Naive thymus-derived CD4-positive, alpha-beta T cell (primary cell): ENCODE measurements at regions of chr3 and their contacts with region 1.

Region 1: GRCh38 chr3:8987645-8988383 is 24.5 kb upstream of the RAD18 start:
- DNase-seq: peak; percentile 29 to 66 (median 53)
- ATAC-seq: peak; percentile 88
- H3K4me3 ChIP-seq: no peak overlapping the region
- H3K4me3 Mint-ChIP-seq: peak overlapping the region in 9 of 10 donors; percentile 43 to 75 (median 66)
- H3K27ac ChIP-seq: no peak overlapping the region
- H3K27ac Mint-ChIP-seq: peak overlapping the region in 2 of 9 donors; percentile 5 to 84
- H3K4me1 ChIP-seq: no peaks in the 10 kb centered on the region
- H3K4me1 Mint-ChIP-seq: peaks cover 0 to 7% (median 5%) of the 10 kb centered on the region in 7 donors
- H3K27me3 ChIP-seq: no peaks in the 10 kb centered on the region
- H3K27me3 Mint-ChIP-seq: no peaks in the 10 kb centered on the region

Region 2: GRCh38 chr3:7657214-7658112 is 1330.4 kb before region 1 on chr3:
- CTCF ChIA-PET with region 1: no interaction called
- POLR2A ChIA-PET with region 1: no interaction called
- intact Hi-C with region 1: no loop called
- DNase-seq: no peak
- ATAC-seq: no peak
- H3K4me3 ChIP-seq: no peak overlapping the region
- H3K4me3 Mint-ChIP-seq: no peak overlapping the region
- H3K27ac ChIP-seq: no peak overlapping the region
- H3K27ac Mint-ChIP-seq: no peak overlapping the region
- H3K4me1 ChIP-seq: no peaks in the 10 kb centered on the region
- H3K4me1 Mint-ChIP-seq: no peaks in the 10 kb centered on the region
- H3K27me3 ChIP-seq: no peaks in the 10 kb centered on the region
- H3K27me3 Mint-ChIP-seq: peaks cover 0 to 15% (median 4%) of the 10 kb centered on the region in 5 donors

Region 3: GRCh38 chr3:9067352-9067975 is 79.7 kb after region 1 on chr3:
- CTCF ChIA-PET with region 1: no interaction called
- POLR2A ChIA-PET with region 1: no interaction called
- intact Hi-C with region 1: loop called (anchors 1 to 5 kb)
- DNase-seq: peak in 4 of 9 donors; percentile 3 to 15 (median 10)
- ATAC-seq: peak; percentile 47
- H3K4me3 ChIP-seq: no peak overlapping the region
- H3K4me3 Mint-ChIP-seq: no peak overlapping the region
- H3K27ac ChIP-seq: no peak overlapping the region
- H3K27ac Mint-ChIP-seq: no peak overlapping the region
- H3K4me1 ChIP-seq: no peaks in the 10 kb centered on the region
- H3K4me1 Mint-ChIP-seq: peaks cover 0 to 7% (median 0%) of the 10 kb centered on the region in 7 donors
- H3K27me3 ChIP-seq: no peaks in the 10 kb centered on the region
- H3K27me3 Mint-ChIP-seq: peaks cover 0 to 7% (median 0%) of the 10 kb centered on the region in 5 donors

Region 4: GRCh38 chr3:10310578-10310977 is 1322.8 kb after region 1 on chr3:
- CTCF ChIA-PET with region 1: no interaction called
- POLR2A ChIA-PET with region 1: no interaction called
- intact Hi-C with region 1: no loop called
- DNase-seq: no peak
- ATAC-seq: no peak
- H3K4me3 ChIP-seq: no peak overlapping the region
- H3K4me3 Mint-ChIP-seq: no peak overlapping the region
- H3K27ac ChIP-seq: no peak overlapping the region
- H3K27ac Mint-ChIP-seq: peak overlapping the region in 1 of 9 donors; percentile 8
- H3K4me1 ChIP-seq: no peaks in the 10 kb centered on the region
- H3K4me1 Mint-ChIP-seq: peaks cover 0 to 23% (median 5%) of the 10 kb centered on the region in 7 donors
- H3K27me3 ChIP-seq: no peaks in the 10 kb centered on the region
- H3K27me3 Mint-ChIP-seq: no peaks in the 10 kb centered on the region